AG04450 (cell line): ENCODE measurements at regions of chr11 and their contacts with region 1.

Region 1: GRCh38 chr11:94897330-94897768 is 76.0 kb downstream of the CWC15 start:
- DNase-seq: no peak
- H3K4me3 ChIP-seq: no peak overlapping the region
- H3K27ac ChIP-seq: no peak overlapping the region
- H3K27me3 ChIP-seq: no peaks in the 10 kb centered on the region
- CTCF ChIP-seq: peak; percentile 96

Region 2: GRCh38 chr11:94885133-94885532 is 12.2 kb before region 1 on chr11:
- CTCF ChIA-PET with region 1: interaction called, 33 read pairs
- POLR2A ChIA-PET with region 1: no interaction called
- DNase-seq: no peak
- H3K4me3 ChIP-seq: no peak overlapping the region
- H3K27ac ChIP-seq: no peak overlapping the region
- H3K27me3 ChIP-seq: no peaks in the 10 kb centered on the region
- CTCF ChIP-seq: no peak

Region 3: GRCh38 chr11:94910779-94911178 is 13.4 kb after region 1 on chr11:
- CTCF ChIA-PET with region 1: interaction called, 19 read pairs
- POLR2A ChIA-PET with region 1: no interaction called
- DNase-seq: peak; percentile 61
- H3K4me3 ChIP-seq: no peak overlapping the region
- H3K27ac ChIP-seq: peak overlapping the region; percentile 69
- H3K27me3 ChIP-seq: no peaks in the 10 kb centered on the region
- CTCF ChIP-seq: no peak

Region 4: GRCh38 chr11:94922310-94923003 is 25.1 kb after region 1 on chr11:
- CTCF ChIA-PET with region 1: interaction called, 10 read pairs
- POLR2A ChIA-PET with region 1: no interaction called
- DNase-seq: no peak
- H3K4me3 ChIP-seq: no peak overlapping the region
- H3K27ac ChIP-seq: no peak overlapping the region
- H3K27me3 ChIP-seq: no peaks in the 10 kb centered on the region
- CTCF ChIP-seq: no peak